ENCODE measurements at regions of chr6 and their contacts with region 1.

Region 1: DNA sequence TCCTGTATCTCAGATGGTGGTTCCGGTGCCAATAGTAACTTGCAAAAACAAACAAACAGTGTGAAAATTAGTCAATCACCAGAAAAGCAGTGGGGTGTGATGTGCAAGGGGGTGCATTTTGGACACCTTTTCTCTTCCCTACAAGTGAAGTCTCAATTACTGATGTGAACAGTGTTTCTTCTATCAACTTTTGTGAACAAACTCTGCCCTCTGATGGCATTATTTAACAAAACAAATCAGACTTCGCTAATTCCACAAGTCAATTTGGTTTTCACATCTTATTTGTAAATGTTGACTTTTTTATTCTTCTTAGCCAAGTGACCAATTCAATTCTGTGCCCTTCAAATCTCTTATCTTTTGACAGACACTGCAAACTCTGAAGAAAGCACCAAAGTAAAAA is 212.2 kb downstream of the UST start:
- DNase-seq: no peak
- ATAC-seq: no peak

Region 2: GRCh38 chr6:148520109-148520841 is 438.7 kb before region 1 on chr6:
- intact Hi-C with region 1: no loop called
- DNase-seq: peak in 1 of 2 donors; percentile 35
- ATAC-seq: no peak

Region 3: DNA sequence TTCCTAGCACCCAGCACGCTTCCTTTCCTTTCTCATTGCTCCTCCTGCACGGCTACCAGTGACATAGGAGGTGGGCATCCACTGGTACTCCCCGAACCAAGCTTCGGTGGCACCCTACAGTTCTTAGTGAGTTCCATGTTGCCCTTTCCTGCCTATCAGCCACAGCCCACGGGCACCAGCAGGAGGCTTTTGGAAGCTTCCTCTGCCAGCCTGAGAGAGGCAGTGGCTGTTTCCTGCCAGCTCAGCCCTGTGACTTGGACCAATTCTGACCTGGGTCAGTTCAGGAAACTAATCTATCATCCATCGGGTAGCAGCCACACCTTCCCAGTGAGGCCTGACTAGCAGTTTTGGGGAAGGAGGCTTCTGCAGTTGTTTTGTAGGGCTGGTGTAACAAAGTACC is 388.6 kb before region 1 on chr6:
- intact Hi-C with region 1: loop called in 1 of 2 experiments (anchors 5 kb)
- DNase-seq: no peak
- ATAC-seq: no peak

Region 4: GRCh38 chr6:149259753-149260152 is 300.7 kb after region 1 on chr6:
- intact Hi-C with region 1: no loop called
- DNase-seq: no peak
- ATAC-seq: no peak